B cell (primary cell): ENCODE measurements at regions of chr3 and their contacts with region 1.

Region 1: DNA sequence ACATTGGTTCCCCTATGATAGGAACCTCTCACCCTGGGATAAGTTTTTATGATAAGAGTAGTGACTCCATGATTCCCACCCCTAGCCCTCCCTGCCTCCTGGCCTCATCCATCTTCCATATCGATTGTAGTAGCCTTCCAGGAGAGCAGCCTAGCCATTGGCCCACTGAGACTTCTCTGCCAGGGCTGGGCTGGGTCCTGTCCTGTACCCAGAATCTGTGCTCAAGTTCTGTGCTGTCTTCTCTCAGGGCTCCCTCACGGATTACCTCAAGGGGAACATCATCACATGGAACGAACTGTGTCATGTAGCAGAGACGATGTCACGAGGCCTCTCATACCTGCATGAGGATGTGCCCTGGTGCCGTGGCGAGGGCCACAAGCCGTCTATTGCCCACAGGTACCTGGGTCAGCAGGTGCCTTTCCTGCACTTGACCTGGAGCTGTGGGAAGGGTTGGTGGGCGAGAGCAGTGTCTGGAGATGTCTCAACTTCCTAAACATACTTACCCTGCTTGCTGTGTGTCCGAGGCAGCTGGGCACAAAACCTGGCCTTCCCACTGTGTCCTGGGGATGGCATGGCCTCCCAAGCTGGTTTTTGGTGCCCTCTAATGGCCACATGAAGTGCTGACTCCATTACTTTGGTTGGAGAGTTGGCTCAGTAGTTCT is 16.6 kb upstream of the EXOG start:
- DNase-seq: peak; percentile 57
- ATAC-seq: peak; percentile 65
- H3K4me3 ChIP-seq: no peak overlapping the region
- H3K4me3 Mint-ChIP-seq: no peak overlapping the region
- H3K27ac ChIP-seq: no peak overlapping the region
- H3K27ac Mint-ChIP-seq: no peak overlapping the region
- H3K4me1 ChIP-seq: no peaks in the 10 kb centered on the region
- H3K4me1 Mint-ChIP-seq: no peaks in the 10 kb centered on the region
- H3K27me3 ChIP-seq: no peaks in the 10 kb centered on the region
- H3K27me3 Mint-ChIP-seq: no peaks in the 10 kb centered on the region
- CTCF ChIP-seq: peak; percentile 77

Region 2: DNA sequence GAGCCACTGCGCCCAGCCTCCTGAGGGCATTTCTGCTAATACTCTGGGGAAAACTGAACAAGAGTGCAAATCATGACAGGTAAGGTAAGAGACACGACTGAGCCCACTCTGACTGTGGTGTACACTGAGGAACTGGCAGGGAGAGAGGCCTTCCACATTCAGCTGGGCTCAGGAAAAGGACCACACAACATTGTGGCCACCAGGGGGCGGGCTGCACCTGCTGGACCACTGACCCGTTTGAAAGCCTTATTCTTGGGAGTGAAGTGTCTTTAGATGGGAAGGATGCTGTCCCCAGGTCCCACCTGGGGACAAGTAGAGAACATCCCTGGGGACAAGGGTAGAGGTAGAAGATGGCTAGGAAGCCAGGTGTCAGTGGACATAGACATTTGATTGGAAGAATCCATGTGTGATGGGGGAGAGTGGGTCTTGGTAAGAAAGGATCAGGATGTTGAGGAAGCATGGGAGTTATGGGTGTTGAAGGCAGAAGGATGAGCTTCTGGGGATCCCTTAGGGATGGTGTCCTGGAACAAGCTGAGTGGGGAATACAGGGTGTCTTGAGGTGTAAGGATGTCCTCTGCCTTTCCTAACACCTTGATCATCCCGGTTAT is 624.1 kb before region 1 on chr3:
- CTCF ChIA-PET with region 1: interaction called, 9 read pairs
- POLR2A ChIA-PET with region 1: no interaction called
- intact Hi-C with region 1: loop called (anchors 2 kb)
- DNase-seq: peak; percentile 61
- ATAC-seq: no peak
- H3K4me3 ChIP-seq: no peak overlapping the region
- H3K4me3 Mint-ChIP-seq: no peak overlapping the region
- H3K27ac ChIP-seq: no peak overlapping the region
- H3K27ac Mint-ChIP-seq: no peak overlapping the region
- H3K4me1 ChIP-seq: peaks cover 5 to 6% of the 10 kb centered on the region in 2 donors
- H3K4me1 Mint-ChIP-seq: no peaks in the 10 kb centered on the region
- H3K27me3 ChIP-seq: peaks cover 0 to 3% (median 0%) of the 10 kb centered on the region in 4 experiments
- H3K27me3 Mint-ChIP-seq: peaks cover 16% of the 10 kb centered on the region
- CTCF ChIP-seq: peak; percentile 81

Region 3: DNA sequence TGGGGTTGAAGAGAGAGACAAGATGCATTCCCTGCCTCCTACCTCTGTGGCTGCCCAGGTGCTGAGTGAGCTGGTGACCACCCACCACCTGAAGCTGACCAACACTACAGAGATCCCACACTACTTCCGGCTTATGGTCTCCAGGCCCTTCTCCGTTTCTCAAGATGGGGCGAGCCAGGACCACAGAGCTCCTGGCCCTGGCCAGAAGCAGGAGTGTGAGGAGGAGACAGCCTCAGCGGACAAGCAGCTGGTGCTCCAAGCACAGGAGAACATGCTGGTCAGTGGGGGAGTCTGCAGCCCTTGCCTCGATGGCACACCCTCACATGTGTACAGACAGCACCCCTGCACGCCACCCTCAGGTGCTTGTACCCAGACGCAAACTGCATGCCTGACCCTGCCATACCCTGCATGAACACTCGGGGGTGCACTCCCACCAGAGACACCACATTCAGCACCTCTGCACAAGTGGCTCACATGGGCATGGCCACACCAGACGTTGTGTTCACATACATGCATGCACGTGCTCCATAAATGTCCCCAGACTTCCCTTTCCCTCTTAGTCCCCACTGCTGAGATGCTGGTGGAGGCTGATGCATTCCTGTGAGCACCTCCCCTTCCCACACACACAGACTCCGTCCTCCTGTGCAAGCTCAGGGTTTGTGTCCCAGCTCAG is 361.7 kb before region 1 on chr3:
- CTCF ChIA-PET with region 1: interaction called, 28 read pairs
- POLR2A ChIA-PET with region 1: no interaction called
- intact Hi-C with region 1: loop called (anchors 1 kb)
- DNase-seq: peak; percentile 71
- ATAC-seq: peak; percentile 84
- H3K4me3 ChIP-seq: no peak overlapping the region
- H3K4me3 Mint-ChIP-seq: no peak overlapping the region
- H3K27ac ChIP-seq: no peak overlapping the region
- H3K27ac Mint-ChIP-seq: no peak overlapping the region
- H3K4me1 ChIP-seq: peaks cover 19 to 23% of the 10 kb centered on the region in 2 donors
- H3K4me1 Mint-ChIP-seq: peaks cover 22% of the 10 kb centered on the region
- H3K27me3 ChIP-seq: no peaks in the 10 kb centered on the region
- H3K27me3 Mint-ChIP-seq: peaks cover 7% of the 10 kb centered on the region
- CTCF ChIP-seq: peak; percentile 81

Region 4: DNA sequence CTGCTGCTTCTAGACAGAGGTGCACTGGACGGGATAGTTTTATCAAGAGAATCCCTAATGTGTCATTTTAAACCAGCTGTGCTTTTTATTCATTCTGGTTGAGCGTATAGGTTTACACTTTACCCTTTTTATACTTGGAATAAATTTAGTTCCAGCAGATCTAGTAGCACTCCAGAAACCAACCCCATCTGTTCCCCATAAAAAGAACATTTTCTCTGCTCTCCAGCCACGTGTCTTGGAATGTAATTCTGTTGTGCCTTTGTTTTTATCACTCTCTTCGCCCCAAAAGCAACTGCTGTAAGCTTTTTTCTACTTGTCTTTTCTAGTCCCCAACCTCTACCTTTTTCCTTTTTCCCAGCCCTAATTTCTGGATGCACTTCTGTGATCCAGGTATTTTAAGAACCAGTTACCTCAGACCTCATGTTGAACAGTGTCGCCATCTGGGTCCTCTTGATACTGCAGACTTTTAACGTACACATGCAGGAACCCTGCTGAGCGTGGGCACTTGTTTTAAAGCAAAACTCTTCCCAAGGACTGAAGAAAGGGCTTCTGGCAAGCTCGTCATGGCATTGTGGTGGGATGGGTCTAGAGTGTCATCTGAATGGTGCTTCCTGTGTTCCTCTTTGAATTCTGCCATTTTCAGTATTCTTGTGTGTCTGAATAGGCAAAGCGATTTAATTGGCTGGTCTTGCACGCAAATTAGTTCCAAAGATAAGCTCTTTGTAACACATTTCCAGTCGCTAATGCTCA is 10.9 kb after region 1 on chr3:
- CTCF ChIA-PET with region 1: interaction called, 14 read pairs
- POLR2A ChIA-PET with region 1: no interaction called
- intact Hi-C with region 1: no loop called
- DNase-seq: no peak
- ATAC-seq: no peak
- H3K4me3 ChIP-seq: no peak overlapping the region
- H3K4me3 Mint-ChIP-seq: no peak overlapping the region
- H3K27ac ChIP-seq: no peak overlapping the region
- H3K27ac Mint-ChIP-seq: no peak overlapping the region
- H3K4me1 ChIP-seq: no peaks in the 10 kb centered on the region
- H3K4me1 Mint-ChIP-seq: peaks cover 2% of the 10 kb centered on the region
- H3K27me3 ChIP-seq: no peaks in the 10 kb centered on the region
- H3K27me3 Mint-ChIP-seq: no peaks in the 10 kb centered on the region
- CTCF ChIP-seq: no peak

Region 5: DNA sequence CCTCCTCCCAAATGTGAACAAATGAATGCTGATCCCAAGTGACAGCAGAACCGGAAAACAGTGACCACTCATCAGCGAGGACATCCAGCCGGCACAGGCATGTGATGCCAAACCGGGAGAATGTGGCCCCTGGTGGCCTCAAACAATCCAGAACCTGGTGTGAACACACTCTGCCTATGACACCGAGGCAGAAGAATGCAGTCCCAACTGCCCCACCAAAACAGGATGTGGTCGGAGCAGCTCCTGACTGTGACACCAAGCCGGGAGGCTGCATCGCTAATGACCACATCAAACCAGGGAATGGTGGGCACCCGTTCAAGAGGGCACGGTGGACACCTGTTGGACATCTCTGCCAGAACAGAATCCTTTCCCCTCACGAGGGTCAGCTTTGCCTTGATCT is 154.5 kb after region 1 on chr3:
- CTCF ChIA-PET with region 1: no interaction called
- POLR2A ChIA-PET with region 1: no interaction called
- intact Hi-C with region 1: no loop called
- DNase-seq: no peak
- ATAC-seq: no peak
- H3K4me3 ChIP-seq: no peak overlapping the region
- H3K4me3 Mint-ChIP-seq: no peak overlapping the region
- H3K27ac ChIP-seq: no peak overlapping the region
- H3K27ac Mint-ChIP-seq: no peak overlapping the region
- H3K4me1 ChIP-seq: no peaks in the 10 kb centered on the region
- H3K4me1 Mint-ChIP-seq: no peaks in the 10 kb centered on the region
- H3K27me3 ChIP-seq: no peaks in the 10 kb centered on the region
- H3K27me3 Mint-ChIP-seq: peaks cover 14% of the 10 kb centered on the region
- CTCF ChIP-seq: no peak